Vagina (tissue), 2 donors: ENCODE measurements at regions of chr17 and their contacts with region 1.

Region 1: GRCh38 chr17:76458580-76459490 is 5.9 kb upstream of the UBE2O start:
- DNase-seq: no peak
- H3K4me3 ChIP-seq: no peak overlapping the region
- H3K27ac ChIP-seq: no peak overlapping the region
- H3K4me1 ChIP-seq: no peaks in the 10 kb centered on the region
- H3K27me3 ChIP-seq: no peaks in the 10 kb centered on the region
- CTCF ChIP-seq: no peak
- POLR2A ChIP-seq: no peak

Region 2: GRCh38 chr17:76208120-76208519 is 250.7 kb before region 1 on chr17:
- intact Hi-C with region 1: no loop called
- DNase-seq: no peak
- H3K4me3 ChIP-seq: no peak overlapping the region
- H3K27ac ChIP-seq: no peak overlapping the region
- H3K4me1 ChIP-seq: no peaks in the 10 kb centered on the region
- H3K27me3 ChIP-seq: no peaks in the 10 kb centered on the region
- CTCF ChIP-seq: no peak
- POLR2A ChIP-seq: no peak

Region 3: DNA sequence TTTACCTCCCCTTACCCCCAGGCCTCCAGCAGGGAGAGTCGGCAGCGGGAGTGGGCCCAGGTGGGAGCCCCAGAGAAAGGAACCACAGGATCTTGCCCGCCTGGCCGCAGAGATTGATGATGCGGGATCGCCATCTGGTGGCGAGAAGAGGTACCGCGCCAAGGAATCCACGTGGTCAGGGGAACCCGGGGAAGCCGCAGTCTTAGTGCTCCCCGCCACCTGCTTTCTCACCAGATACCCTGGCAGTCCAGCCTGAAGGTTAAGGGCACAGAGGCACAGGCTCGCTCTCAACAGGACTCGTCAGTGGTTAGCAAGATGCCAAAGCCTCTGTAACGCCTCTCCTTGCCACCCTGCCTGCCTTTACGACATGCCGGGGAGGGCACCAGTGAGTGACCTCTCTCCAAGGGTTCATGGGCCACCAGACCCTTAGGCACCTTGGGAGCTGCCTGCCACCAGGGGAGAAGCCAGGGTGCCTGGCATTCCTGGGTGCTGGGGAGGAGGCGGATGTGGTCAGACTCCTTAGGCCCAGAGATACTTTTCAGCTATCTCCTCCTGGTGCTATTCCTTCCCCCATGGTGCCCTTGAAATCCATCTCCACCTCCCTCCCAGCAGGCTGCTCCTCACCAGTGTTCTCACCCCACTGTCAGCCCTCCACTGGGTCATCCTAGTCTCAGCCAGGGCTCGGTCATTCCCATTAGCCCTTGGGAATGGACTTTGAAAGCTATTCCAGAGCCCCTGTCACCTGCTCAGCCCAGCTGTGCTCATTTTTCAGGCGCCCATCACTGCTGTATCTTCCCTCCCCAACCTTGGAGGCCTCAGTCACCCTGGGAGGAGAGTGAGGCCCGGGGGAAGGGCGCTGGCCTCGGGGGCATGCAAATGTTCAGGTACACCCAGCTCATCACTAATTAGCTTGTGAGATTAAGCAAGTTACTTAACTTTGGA is 47.8 kb after region 1 on chr17:
- intact Hi-C with region 1: loop called (anchors 2 kb)
- DNase-seq: no peak
- H3K4me3 ChIP-seq: no peak overlapping the region
- H3K27ac ChIP-seq: no peak overlapping the region
- H3K4me1 ChIP-seq: peaks cover 17% of the 10 kb centered on the region
- H3K27me3 ChIP-seq: no peaks in the 10 kb centered on the region
- CTCF ChIP-seq: peak; percentile 90 to 95 (median 94)
- POLR2A ChIP-seq: no peak